Activated CD8-positive, alpha-beta T cell treated with anti-CD3 and anti-CD28 coated beads, Interleukin-2, amount 10 ng/mL, durations not matched to agents 7 days and 5 days (primary cell): ENCODE measurements at regions of chr12 and their contacts with region 1.

Region 1: GRCh38 chr12:3931746-3932145 is 58.5 kb upstream of the PARP11 start:
- DNase-seq: no peak
- ATAC-seq: no peak
- H3K4me3 Mint-ChIP-seq: no peak overlapping the region
- H3K27ac Mint-ChIP-seq: no peak overlapping the region
- H3K4me1 Mint-ChIP-seq: peaks cover 53% of the 10 kb centered on the region
- H3K27me3 Mint-ChIP-seq: peaks cover 4% of the 10 kb centered on the region

Region 2: DNA sequence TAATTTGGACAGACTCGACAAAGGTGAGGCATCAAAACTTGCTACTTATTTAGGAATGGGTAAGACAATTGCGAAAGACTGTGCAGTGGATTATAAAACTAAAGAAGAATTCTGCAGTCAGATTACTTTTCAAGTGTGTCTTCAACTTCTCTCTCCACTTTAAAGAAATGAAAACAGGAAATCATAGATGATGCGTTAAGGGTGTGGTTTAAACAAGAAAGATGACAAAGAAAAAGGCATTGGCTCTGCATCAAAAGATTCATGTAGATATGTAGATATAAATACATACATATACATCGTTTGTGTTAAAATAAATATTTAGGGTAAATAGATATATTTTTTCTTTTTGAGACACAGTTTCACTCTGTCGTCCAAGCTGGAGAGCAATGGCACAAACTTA is 16.0 kb after region 1 on chr12:
- CTCF ChIA-PET with region 1: interaction called, 14 read pairs
- POLR2A ChIA-PET with region 1: no interaction called
- DNase-seq: no peak
- ATAC-seq: no peak
- H3K4me3 Mint-ChIP-seq: peak overlapping the region; percentile 2
- H3K27ac Mint-ChIP-seq: peak overlapping the region; percentile 75
- H3K4me1 Mint-ChIP-seq: peaks cover 45% of the 10 kb centered on the region
- H3K27me3 Mint-ChIP-seq: peaks cover 9% of the 10 kb centered on the region